GM10248 (cell line): ENCODE measurements at regions of chr1 and their contacts with region 1.

Region 1: GRCh38 chr1:210448297-210448892 is 119.7 kb downstream of the HHAT start:
- DNase-seq: peak; percentile 34
- CTCF ChIP-seq: peak; percentile 43

Region 2: DNA sequence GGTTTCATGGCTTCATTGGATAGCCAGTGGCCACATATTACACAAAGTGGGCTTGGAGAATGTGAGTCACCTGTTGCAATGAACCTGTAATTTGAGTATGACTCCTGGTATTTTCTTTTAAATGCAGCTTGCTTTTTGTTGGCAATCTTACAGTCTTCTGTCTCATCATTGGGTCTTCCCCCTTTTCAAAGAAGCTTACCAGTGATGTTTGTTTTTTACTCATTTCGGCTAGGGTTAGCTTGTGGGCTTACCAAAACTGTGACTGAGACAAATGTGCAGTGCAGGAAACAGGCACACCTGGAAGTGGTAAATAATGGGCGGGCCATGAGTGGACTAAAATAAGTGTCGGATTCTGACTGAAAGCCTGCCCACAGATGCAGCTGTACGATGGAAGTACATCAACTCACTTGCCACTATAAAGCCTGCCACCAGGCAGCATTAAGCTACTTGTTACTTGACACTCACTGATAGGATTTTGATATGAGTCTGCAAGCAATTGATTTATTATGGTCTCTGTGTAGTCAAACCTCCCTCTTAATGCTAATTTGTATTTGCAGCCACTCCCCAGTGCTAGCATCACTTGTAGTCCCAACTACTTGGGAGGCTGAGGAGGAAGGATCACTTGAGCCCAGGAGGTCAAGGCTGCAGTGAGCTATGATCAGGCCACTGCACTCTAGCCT is 115.5 kb before region 1 on chr1:
- CTCF ChIA-PET with region 1: no interaction called
- POLR2A ChIA-PET with region 1: no interaction called
- DNase-seq: peak; percentile 41
- CTCF ChIP-seq: no peak

Region 3: GRCh38 chr1:210394281-210394821 is 54.0 kb before region 1 on chr1:
- CTCF ChIA-PET with region 1: no interaction called
- POLR2A ChIA-PET with region 1: no interaction called
- DNase-seq: no peak
- CTCF ChIP-seq: no peak

Region 4: DNA sequence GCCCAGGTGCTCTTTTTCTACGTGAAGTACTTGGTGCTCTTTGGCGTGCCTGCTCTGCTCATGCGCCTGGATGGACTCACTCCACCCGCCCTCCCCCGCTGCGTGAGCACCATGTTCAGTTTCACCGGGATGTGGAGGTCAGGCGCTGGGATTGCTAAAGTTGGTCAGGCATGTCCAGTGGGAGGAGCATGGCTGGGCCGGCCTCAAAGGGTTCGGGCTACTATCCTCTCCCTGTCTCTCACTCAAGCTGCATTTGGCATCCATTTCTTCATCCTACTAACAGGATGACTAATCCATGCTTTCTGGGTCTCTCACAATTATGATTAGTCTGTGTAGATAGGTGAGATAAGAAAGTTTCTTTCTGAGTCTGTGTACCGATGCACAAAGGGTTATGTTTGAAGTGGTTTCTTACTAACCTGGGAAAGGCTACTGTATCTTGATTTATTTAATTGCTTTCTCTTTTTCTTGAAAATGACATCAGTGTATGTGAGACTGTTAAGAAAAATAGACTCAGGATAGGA is 16.2 kb after region 1 on chr1:
- CTCF ChIA-PET with region 1: interaction called, 13 read pairs
- POLR2A ChIA-PET with region 1: no interaction called
- DNase-seq: no peak
- CTCF ChIP-seq: no peak